Activated CD4-positive, alpha-beta memory T cell treated with anti-CD3 and anti-CD28 coated beads for 36 hours (primary cell): ENCODE measurements at regions of chrX and their contacts with region 1.

Region 1: DNA sequence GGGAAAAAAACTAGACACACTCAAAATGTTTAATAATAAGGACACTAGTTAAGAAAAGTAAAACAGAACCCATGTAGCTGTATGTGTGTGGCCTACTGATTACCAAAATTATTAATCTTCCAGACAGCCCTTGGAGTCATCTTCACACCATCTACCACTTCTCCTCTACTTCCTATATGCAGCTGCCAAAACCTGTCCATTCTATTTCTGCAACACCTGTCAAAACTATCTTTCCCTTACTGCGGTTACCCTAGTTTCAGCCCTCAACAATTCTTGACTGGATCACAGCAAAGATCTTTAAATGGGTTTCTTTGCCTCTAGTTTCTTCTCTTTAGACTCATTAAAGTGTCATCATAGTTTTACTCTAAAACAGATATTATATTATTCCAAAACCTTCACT is 72.6 kb downstream of the GPR82 start:
- DNase-seq: no peak
- H3K4me3 Mint-ChIP-seq: no peak overlapping the region
- H3K27ac Mint-ChIP-seq: peak overlapping the region; percentile 31
- H3K4me1 Mint-ChIP-seq: peaks cover 39% of the 10 kb centered on the region
- H3K27me3 Mint-ChIP-seq: no peaks in the 10 kb centered on the region

Region 2: DNA sequence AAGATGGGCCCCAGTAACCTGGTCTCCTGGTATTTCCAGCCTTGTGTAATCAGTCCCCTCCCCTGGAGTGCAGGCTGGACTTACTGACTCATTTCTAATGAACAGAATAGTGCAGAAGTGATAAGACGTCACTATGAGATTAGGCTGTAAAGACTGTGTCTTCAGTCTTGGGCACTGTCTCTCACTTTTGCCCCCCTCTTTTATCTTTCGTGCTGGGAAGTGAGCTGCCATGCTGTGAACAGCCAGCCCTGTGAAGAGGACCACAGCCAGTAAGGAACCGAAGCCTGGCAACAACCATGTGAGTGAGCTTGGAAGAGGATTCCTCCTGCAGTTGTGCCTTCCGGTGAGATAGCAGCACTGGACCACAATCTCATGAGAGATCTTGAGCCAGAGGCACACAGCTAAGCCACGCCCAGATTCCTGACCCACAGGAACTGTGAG is 175.3 kb before region 1 on chrX:
- CTCF ChIA-PET with region 1: no interaction called
- POLR2A ChIA-PET with region 1: no interaction called
- intact Hi-C with region 1: no loop called
- DNase-seq: no peak
- H3K4me3 Mint-ChIP-seq: no peak overlapping the region
- H3K27ac Mint-ChIP-seq: no peak overlapping the region
- H3K4me1 Mint-ChIP-seq: no peaks in the 10 kb centered on the region
- H3K27me3 Mint-ChIP-seq: no peaks in the 10 kb centered on the region

Region 3: GRCh38 chrX:41906515-41907165 is 110.1 kb after region 1 on chrX:
- CTCF ChIA-PET with region 1: interaction called, 4 read pairs
- POLR2A ChIA-PET with region 1: interaction called, 3 read pairs
- intact Hi-C with region 1: loop called (anchors 2 kb)
- DNase-seq: peak; percentile 62
- H3K4me3 Mint-ChIP-seq: no peak overlapping the region
- H3K27ac Mint-ChIP-seq: peak overlapping the region; percentile 51
- H3K4me1 Mint-ChIP-seq: peaks cover 69% of the 10 kb centered on the region
- H3K27me3 Mint-ChIP-seq: no peaks in the 10 kb centered on the region

Region 4: DNA sequence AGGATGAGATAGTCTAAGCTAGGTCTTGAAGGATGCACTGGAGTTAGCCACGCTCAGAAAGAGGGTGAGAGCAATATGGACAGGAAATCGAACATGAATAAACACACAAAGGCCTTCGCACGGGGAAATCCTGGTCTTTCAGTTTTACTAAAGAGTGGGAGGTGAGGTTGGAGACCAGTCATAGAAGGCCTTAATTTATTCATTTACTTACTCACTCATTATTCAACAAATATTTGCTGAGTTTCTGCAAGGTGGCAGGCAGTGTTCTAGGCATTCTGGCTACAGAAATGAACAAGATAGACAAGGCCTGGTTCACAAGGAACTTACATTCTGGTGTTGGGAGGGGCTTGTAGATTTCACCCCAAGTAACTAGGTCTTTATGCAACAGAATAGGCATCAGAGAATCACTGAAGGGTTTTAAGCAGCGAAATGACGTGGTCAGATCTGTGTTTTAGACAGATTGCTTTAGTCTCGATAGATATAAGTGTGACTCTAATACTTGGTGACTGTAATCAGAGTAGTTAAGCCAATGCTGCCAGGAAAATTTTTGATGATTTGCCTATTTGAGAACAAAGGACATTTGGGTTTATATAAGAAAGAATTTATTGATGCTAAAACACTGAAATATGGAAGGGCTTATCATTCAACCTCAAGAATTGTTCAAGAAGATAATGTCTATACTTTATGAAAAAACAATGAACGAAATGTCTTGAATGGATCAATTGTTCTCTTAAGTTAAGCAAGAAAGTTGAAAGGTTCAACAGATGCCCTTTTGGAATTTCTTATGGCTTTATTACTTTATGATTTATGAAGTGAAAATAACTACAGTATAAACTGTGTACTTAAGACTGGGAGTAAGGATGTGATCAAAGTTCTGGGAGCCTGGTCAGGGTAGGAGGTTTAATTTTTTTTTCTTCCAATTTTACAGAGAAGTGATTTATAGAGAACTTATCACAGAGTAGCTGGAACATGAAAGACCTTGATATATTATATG is 311.2 kb after region 1 on chrX:
- CTCF ChIA-PET with region 1: no interaction called
- POLR2A ChIA-PET with region 1: interaction called, 5 read pairs
- intact Hi-C with region 1: loop called (anchors 2 kb)
- DNase-seq: peak; percentile 61
- H3K4me3 Mint-ChIP-seq: no peak overlapping the region
- H3K27ac Mint-ChIP-seq: peak overlapping the region; percentile 38
- H3K4me1 Mint-ChIP-seq: peaks cover 28% of the 10 kb centered on the region
- H3K27me3 Mint-ChIP-seq: no peaks in the 10 kb centered on the region

Region 5: GRCh38 chrX:42276982-42277690 is 480.6 kb after region 1 on chrX:
- CTCF ChIA-PET with region 1: no interaction called
- POLR2A ChIA-PET with region 1: no interaction called
- intact Hi-C with region 1: loop called (anchors 10 kb)
- DNase-seq: no peak
- H3K4me3 Mint-ChIP-seq: no peak overlapping the region
- H3K27ac Mint-ChIP-seq: no peak overlapping the region
- H3K4me1 Mint-ChIP-seq: peaks cover 7% of the 10 kb centered on the region
- H3K27me3 Mint-ChIP-seq: no peaks in the 10 kb centered on the region

Region 6: DNA sequence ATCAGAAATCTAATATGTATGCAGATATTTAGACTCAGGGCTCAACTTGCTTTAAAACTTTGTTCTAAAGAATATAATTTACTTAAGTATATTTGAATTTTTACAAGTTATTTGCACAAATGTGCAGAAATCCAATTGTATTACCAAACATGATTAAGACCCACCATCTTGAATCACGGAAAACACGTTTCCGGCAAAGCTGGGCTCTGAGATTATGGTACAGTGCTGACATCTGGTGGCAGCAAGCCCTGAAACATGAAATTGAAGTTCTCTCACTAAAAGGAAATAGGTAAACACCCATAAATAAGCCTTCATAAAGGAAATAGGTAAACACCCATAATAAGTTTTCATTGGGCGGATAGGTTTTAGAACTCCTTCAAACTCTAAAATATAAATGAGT is 1761.2 kb after region 1 on chrX:
- CTCF ChIA-PET with region 1: no interaction called
- POLR2A ChIA-PET with region 1: no interaction called
- intact Hi-C with region 1: loop called (anchors 5 kb)
- DNase-seq: peak; percentile 66
- H3K4me3 Mint-ChIP-seq: no peak overlapping the region
- H3K27ac Mint-ChIP-seq: no peak overlapping the region
- H3K4me1 Mint-ChIP-seq: no peaks in the 10 kb centered on the region
- H3K27me3 Mint-ChIP-seq: no peaks in the 10 kb centered on the region